CD4-positive, alpha-beta T cell (primary cell): ENCODE measurements at regions of chr9 and their contacts with region 1.

Region 1: DNA sequence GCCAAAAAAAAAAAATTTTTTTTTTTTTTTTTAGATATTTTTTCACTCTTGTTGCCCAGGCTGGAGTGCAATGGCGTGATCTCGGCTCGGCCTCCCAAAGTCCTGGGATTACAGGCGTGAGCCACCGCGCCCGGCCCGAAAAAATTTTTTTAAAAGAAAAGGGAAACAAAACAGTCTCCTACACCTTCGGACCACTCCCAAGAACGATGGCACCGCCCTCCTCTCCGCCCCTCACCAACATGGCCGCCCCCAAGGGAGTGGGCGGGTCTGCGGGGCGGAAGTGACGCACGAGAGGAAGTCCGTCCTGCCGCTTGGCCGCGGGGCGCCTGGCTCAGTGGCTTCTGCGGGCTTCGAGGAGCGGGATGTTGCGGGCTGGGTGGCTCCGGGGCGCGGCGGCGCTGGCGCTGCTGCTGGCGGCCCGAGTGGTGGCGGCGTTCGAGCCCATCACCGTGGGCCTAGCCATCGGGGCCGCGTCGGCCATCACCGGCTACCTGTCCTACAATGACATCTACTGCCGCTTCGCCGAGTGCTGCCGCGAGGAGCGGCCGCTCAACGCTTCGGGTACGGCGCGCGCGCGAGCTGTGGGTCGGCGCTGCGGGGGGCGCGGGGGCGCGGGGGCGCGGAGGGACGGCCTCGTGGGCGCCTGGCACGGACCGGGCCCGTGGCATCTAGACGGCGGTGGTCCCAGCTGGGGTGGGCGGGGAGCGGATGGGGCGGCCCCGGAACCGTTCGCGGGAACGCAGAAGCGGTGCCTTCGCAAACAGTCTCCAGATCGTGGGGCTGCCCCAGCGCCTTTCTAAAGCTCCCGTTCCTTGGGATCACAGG is at the start of gene TOR1B:
- DNase-seq: peak; percentile 87 to 97 (median 94)
- ATAC-seq: peak; percentile 92
- H3K4me3 ChIP-seq: peak within 1 kb of the TSS; percentile 81
- H3K4me3 Mint-ChIP-seq: peak within 1 kb of the TSS; percentile 91
- H3K27ac ChIP-seq: peak within 1 kb of the TSS; percentile 49 to 77
- H3K27ac Mint-ChIP-seq: peak within 1 kb of the TSS; percentile 86
- H3K4me1 ChIP-seq: peaks cover 25% of the 10 kb centered on the region
- H3K4me1 Mint-ChIP-seq: peaks cover 24% of the 10 kb centered on the region
- H3K27me3 ChIP-seq: no peaks in the 10 kb centered on the region
- H3K27me3 Mint-ChIP-seq: no peaks in the 10 kb centered on the region
- CTCF ChIP-seq: no peak
- total RNA-seq, gene TOR1B: 13.4 to 15.1 TPM

Region 2: DNA sequence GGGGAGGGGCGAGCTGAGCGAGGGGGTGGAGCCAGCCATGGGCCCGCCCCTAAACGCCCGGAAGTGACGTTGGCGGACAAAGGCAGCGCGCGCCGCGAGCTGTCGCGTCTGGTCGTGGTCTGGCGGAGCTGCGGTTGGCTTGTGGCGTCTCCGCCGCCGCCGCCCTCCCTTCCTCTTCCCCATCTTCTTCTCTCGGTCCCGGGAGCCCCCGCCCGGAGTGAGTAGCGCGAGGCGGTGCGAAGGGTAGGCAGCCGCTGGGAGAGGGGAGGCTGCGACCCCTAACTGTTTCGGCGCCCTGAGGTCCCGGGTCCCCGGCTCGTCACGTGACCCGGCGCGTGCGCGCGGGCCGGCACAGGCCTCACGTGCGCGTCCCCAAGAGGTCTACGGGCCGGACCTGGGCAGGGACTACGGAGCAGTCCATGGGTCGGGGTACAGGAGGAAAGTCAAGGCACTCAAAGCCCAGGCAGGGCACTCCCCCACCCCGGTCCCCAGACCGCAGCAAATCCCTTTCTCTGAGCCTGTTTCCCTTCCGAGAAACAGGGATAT is 176.9 kb before region 1 on chr9 and contains the start of gene NTMT1:
- CTCF ChIA-PET with region 1: no interaction called
- POLR2A ChIA-PET with region 1: no interaction called
- intact Hi-C with region 1: loop called in 1 of 2 experiments (anchors 10 kb)
- DNase-seq: peak; percentile 85 to 97 (median 90)
- ATAC-seq: peak; percentile 65
- H3K4me3 ChIP-seq: peak within 1 kb of the TSS; percentile 75
- H3K4me3 Mint-ChIP-seq: peak within 1 kb of the TSS; percentile 94
- H3K27ac ChIP-seq: peak within 1 kb of the TSS; percentile 77 to 98
- H3K27ac Mint-ChIP-seq: peak within 1 kb of the TSS; percentile 94
- H3K4me1 ChIP-seq: peaks cover 70% of the 10 kb centered on the region
- H3K4me1 Mint-ChIP-seq: peaks cover 63% of the 10 kb centered on the region
- H3K27me3 ChIP-seq: peaks cover 6 to 10% of the 10 kb centered on the region in 2 experiments
- H3K27me3 Mint-ChIP-seq: peaks cover 13% of the 10 kb centered on the region
- CTCF ChIP-seq: no peak
- total RNA-seq, gene NTMT1: 50.7 to 52.5 TPM

Region 3: DNA sequence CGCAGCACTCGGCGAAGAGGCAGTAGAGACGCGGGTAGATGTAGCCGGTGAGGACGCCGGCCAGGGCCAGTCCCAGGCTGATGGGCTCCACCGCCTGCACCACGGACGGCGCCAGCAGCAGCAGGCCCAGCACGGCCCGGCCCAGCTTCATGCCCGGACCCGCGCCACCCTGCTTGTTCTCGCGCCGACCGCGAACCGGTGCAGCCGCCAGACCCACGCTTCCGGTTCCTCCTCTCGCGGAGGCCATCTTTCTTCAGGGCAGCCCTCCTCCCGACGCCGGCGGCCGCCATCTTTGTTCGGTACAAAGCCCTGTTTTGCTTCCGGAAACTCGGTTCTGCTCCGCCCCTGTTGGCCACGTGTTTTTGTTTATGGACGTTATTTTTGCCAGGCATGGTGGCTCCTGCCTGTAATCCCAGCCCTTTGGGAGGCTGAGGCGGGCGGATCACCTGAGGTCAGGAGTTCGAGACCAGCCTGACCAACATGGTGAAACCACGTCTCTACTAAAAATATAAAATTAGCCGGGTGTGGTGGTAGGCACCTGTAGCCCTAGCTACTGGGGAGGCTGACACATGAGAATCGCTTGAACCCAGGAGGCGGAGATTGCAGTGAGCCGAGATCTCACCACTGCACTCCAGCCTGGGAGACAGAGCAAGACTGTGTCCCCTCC is 21.0 kb after region 1 on chr9 and contains the start of gene TOR1A:
- CTCF ChIA-PET with region 1: interaction called, 3 read pairs
- POLR2A ChIA-PET with region 1: interaction called, 3 read pairs
- intact Hi-C with region 1: loop called in 1 of 2 experiments (anchors 1 kb)
- DNase-seq: peak; percentile 85 to 95 (median 90)
- ATAC-seq: peak; percentile 95
- H3K4me3 ChIP-seq: peak within 1 kb of the TSS; percentile 64
- H3K4me3 Mint-ChIP-seq: peak within 1 kb of the TSS; percentile 94
- H3K27ac ChIP-seq: peak within 1 kb of the TSS in 1 of 2 donors; percentile 46
- H3K27ac Mint-ChIP-seq: peak within 1 kb of the TSS; percentile 81
- H3K4me1 ChIP-seq: peaks cover 14% of the 10 kb centered on the region
- H3K4me1 Mint-ChIP-seq: peaks cover 12% of the 10 kb centered on the region
- H3K27me3 ChIP-seq: no peaks in the 10 kb centered on the region
- H3K27me3 Mint-ChIP-seq: no peaks in the 10 kb centered on the region
- CTCF ChIP-seq: no peak
- total RNA-seq, gene TOR1A: 12.6 to 13.9 TPM

Region 4: DNA sequence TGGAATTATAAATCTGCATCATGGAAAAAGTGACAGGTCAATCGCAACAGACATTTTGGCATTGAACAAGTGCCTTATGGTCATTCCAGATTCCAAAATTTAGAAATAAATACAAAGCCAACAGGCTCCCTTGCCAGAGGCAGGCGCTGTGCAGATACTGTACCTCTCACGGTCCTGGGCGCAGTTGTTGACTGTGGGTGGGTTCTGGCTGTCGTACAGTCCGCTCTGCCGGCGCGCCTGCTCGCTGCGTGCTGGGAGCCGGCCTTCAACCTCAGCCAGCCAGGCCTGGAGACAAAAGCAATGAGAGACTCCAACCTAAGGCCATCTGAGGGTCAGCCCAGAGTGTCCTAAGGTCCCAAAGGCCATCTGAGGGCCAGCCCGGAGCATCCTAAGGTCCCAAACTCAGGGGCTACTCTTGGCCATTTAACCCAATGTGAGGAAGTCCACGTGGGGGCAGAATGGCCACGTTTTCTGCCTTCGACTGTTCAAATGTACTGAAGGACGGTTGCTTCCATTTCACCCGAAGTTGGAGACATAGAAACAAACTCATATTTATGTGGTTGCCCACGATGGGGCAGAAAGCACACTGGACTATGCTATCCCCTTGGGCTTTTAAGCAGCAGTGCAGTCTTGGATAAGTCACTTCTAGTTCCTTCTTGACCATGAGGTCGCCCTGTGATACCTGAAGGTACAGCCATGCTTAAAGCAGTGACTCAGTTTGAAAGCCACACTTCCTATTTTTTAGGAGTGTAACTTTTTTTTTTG is 97.4 kb after region 1 on chr9:
- CTCF ChIA-PET with region 1: no interaction called
- POLR2A ChIA-PET with region 1: no interaction called
- intact Hi-C with region 1: no loop called
- DNase-seq: peak in 1 of 14 experiments; percentile 37
- ATAC-seq: no peak
- H3K4me3 ChIP-seq: no peak overlapping the region
- H3K4me3 Mint-ChIP-seq: no peak overlapping the region
- H3K27ac ChIP-seq: no peak overlapping the region
- H3K27ac Mint-ChIP-seq: peak overlapping the region; percentile 99
- H3K4me1 ChIP-seq: peaks cover 41% of the 10 kb centered on the region
- H3K4me1 Mint-ChIP-seq: peaks cover 65% of the 10 kb centered on the region
- H3K27me3 ChIP-seq: no peaks in the 10 kb centered on the region
- H3K27me3 Mint-ChIP-seq: no peaks in the 10 kb centered on the region
- CTCF ChIP-seq: no peak

Region 5: GRCh38 chr9:130010151-130010988 is 207.3 kb after region 1 on chr9:
- CTCF ChIA-PET with region 1: no interaction called
- POLR2A ChIA-PET with region 1: no interaction called
- intact Hi-C with region 1: no loop called
- DNase-seq: peak in 7 of 14 experiments; percentile 19 to 94 (median 51)
- ATAC-seq: peak; percentile 73
- H3K4me3 ChIP-seq: no peak overlapping the region
- H3K4me3 Mint-ChIP-seq: peak overlapping the region; percentile 54
- H3K27ac ChIP-seq: peak overlapping the region; percentile 90 to 92
- H3K27ac Mint-ChIP-seq: peak overlapping the region; percentile 93
- H3K4me1 ChIP-seq: peaks cover 62% of the 10 kb centered on the region
- H3K4me1 Mint-ChIP-seq: peaks cover 82% of the 10 kb centered on the region
- H3K27me3 ChIP-seq: no peaks in the 10 kb centered on the region
- H3K27me3 Mint-ChIP-seq: no peaks in the 10 kb centered on the region
- CTCF ChIP-seq: no peak

Region 6: GRCh38 chr9:130095872-130096271 is 292.8 kb after region 1 on chr9:
- CTCF ChIA-PET with region 1: no interaction called
- POLR2A ChIA-PET with region 1: no interaction called
- intact Hi-C with region 1: loop called in 1 of 2 experiments (anchors 5 kb)
- DNase-seq: no peak
- ATAC-seq: no peak
- H3K4me3 ChIP-seq: no peak overlapping the region
- H3K4me3 Mint-ChIP-seq: no peak overlapping the region
- H3K27ac ChIP-seq: no peak overlapping the region
- H3K27ac Mint-ChIP-seq: peak overlapping the region; percentile 49
- H3K4me1 ChIP-seq: peaks cover 3% of the 10 kb centered on the region
- H3K4me1 Mint-ChIP-seq: peaks cover 4% of the 10 kb centered on the region
- H3K27me3 ChIP-seq: no peaks in the 10 kb centered on the region
- H3K27me3 Mint-ChIP-seq: no peaks in the 10 kb centered on the region
- CTCF ChIP-seq: no peak

Region 7: GRCh38 chr9:130483371-130484303 is 680.6 kb after region 1 on chr9:
- CTCF ChIA-PET with region 1: no interaction called
- POLR2A ChIA-PET with region 1: no interaction called
- intact Hi-C with region 1: no loop called
- DNase-seq: no peak
- ATAC-seq: no peak
- H3K4me3 ChIP-seq: no peak overlapping the region
- H3K4me3 Mint-ChIP-seq: no peak overlapping the region
- H3K27ac ChIP-seq: no peak overlapping the region
- H3K27ac Mint-ChIP-seq: no peak overlapping the region
- H3K4me1 ChIP-seq: no peaks in the 10 kb centered on the region
- H3K4me1 Mint-ChIP-seq: no peaks in the 10 kb centered on the region
- H3K27me3 ChIP-seq: peaks cover 8 to 16% of the 10 kb centered on the region in 2 experiments
- H3K27me3 Mint-ChIP-seq: peaks cover 34% of the 10 kb centered on the region
- CTCF ChIP-seq: no peak